Colonic mucosa (tissue), 4 donors: ENCODE measurements at regions of chr10 and their contacts with region 1.

Region 1: GRCh38 chr10:121049489-121049888 is 198.3 kb downstream of the WDR11 start:
- DNase-seq: no peak
- H3K4me3 ChIP-seq: no peak overlapping the region
- H3K27ac ChIP-seq: no peak overlapping the region
- H3K4me1 ChIP-seq: no peaks in the 10 kb centered on the region
- H3K27me3 ChIP-seq: no peaks in the 10 kb centered on the region
- CTCF ChIP-seq: no peak

Region 2: GRCh38 chr10:120850911-120851865 is 198.3 kb before region 1 on chr10 and contains the start of gene WDR11:
- intact Hi-C with region 1: no loop called
- DNase-seq: peak; percentile 91
- H3K4me3 ChIP-seq: peak within 1 kb of the TSS; percentile 66
- H3K27ac ChIP-seq: peak within 1 kb of the TSS; percentile 67
- H3K4me1 ChIP-seq: no peaks in the 10 kb centered on the region
- H3K27me3 ChIP-seq: no peaks in the 10 kb centered on the region
- CTCF ChIP-seq: no peak
- total RNA-seq, gene WDR11: 35.5 to 42.2 TPM

Region 3: GRCh38 chr10:121007264-121007663 is 42.2 kb before region 1 on chr10:
- intact Hi-C with region 1: loop called (anchors 5 kb)
- DNase-seq: no peak
- H3K4me3 ChIP-seq: no peak overlapping the region
- H3K27ac ChIP-seq: no peak overlapping the region
- H3K4me1 ChIP-seq: no peaks in the 10 kb centered on the region
- H3K27me3 ChIP-seq: no peaks in the 10 kb centered on the region
- CTCF ChIP-seq: no peak